ENCODE measurements at regions of chr2 and their contacts with region 1.

Region 1: GRCh38 chr2:86461042-86461743 is 20.0 kb downstream of the KDM3A start:
- DNase-seq: no peak
- ATAC-seq: no peak
- H3K4me3 ChIP-seq: no peak overlapping the region
- H3K27ac ChIP-seq: no peak overlapping the region
- H3K4me1 ChIP-seq: peaks cover 3% of the 10 kb centered on the region
- H3K27me3 ChIP-seq: no peaks in the 10 kb centered on the region

Region 2: DNA sequence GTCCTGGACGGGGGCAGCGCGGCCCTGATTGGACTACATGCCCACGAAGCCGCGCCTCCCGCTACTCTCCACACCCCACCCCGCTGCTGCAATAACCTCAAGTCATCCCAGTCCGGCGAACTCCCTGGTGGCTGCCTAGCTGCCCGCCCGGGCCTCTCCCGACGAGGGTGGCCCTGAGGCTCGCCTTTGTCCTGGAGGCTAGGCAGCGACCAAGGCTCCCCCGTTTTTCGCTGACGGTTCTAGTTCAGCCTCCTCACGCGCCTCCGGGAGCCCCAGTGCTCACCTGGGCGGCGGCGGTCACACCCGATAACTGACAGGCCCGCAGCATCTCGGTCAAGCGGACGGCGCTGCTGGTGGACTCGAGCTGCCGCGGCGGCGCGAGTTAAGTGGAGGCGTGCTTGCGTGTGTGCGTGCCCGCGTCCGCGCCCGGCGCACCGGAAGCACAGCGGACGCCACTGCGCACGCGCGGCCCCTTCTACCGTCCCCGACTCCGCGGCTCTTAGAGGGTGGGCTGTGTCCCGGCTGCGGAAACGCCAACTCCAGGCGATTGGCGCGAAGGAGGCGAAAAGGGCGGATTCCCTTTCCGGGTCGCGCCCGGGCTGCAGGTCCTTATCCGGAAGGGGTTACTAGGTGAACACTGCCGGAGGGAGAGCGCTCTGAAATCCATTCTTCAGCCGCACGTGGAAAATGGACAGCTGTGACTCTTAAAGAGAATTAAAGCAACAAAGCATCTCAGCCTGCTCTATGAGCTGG is 266.0 kb before region 1 on chr2 and contains the start of gene IMMT:
- intact Hi-C with region 1: no loop called
- DNase-seq: peak; percentile 98 to 99 (median 99)
- ATAC-seq: peak; percentile 96
- H3K4me3 ChIP-seq: peak within 1 kb of the TSS; percentile 76
- H3K27ac ChIP-seq: peak within 1 kb of the TSS; percentile 99
- H3K4me1 ChIP-seq: peaks cover 8% of the 10 kb centered on the region
- H3K27me3 ChIP-seq: no peaks in the 10 kb centered on the region
- total RNA-seq, gene IMMT: 188 to 204 (median 201) TPM

Region 3: DNA sequence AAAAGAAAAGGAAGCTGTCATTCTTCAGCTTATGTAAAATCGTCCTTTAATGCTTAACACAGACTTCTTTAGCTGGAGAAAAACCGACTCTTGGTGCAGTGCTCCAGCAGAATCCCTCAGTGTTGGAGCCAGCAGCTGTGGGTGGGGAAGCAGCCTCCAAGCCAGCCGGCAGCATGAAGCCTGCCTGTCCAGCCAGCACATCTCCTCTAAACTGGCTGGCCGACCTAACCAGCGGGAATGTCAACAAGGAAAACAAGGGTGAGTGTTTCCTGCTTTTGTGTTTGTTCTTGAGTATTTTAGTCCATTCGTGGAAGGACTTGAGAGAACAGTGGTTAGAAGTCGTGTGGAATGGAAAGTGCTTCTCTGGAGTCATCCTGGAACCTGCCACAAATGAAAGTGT is 18.9 kb after region 1 on chr2:
- intact Hi-C with region 1: loop called in 1 of 4 experiments (anchors 2 kb)
- DNase-seq: peak; percentile 54 to 90 (median 79)
- ATAC-seq: peak; percentile 81
- H3K4me3 ChIP-seq: no peak overlapping the region
- H3K27ac ChIP-seq: no peak overlapping the region
- H3K4me1 ChIP-seq: peaks cover 18% of the 10 kb centered on the region
- H3K27me3 ChIP-seq: no peaks in the 10 kb centered on the region

Region 4: DNA sequence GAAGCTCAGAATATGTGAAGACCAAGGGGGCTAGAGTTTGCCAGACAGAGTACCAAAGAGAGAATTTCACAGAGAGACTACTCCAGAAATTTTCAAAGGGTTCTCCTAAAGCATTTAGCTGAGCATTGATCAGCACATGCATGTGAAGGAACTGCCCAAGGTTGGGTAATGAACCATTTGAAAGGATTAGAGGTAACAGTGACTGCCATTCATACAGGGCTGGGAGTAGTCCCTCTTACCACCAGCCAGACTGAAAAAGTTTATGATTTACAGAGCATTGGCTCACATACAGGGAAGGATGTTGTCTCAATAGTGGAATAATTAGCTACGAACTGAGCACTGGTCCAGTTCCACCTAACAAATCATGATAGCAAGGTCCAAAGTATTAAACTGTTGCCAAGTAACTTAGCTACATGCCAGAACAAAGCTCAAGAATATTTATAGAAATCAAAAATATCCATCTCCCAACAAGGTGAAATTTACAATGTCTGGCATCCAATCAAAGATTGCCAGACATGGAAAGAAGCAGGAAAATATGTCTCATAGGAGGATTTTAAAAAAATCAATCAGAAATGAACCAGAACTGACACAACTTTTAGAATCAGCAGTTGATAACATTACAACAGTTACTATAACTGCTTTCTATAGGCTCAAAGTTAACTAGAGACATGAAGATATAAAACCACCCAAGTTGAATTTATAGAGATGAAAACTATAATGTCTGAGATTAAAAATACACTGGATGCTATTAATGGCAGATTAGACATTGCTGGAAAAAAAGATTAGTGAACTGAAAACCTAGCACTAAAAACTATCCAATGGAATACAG is 188.1 kb after region 1 on chr2:
- intact Hi-C with region 1: no loop called
- DNase-seq: no peak
- ATAC-seq: no peak
- H3K4me3 ChIP-seq: no peak overlapping the region
- H3K27ac ChIP-seq: no peak overlapping the region
- H3K4me1 ChIP-seq: no peaks in the 10 kb centered on the region
- H3K27me3 ChIP-seq: no peaks in the 10 kb centered on the region

Measured in right cardiac atrium (tissue), 5 donors.